ENCODE measurements at regions of chr4 and their contacts with region 1.

Region 1: DNA sequence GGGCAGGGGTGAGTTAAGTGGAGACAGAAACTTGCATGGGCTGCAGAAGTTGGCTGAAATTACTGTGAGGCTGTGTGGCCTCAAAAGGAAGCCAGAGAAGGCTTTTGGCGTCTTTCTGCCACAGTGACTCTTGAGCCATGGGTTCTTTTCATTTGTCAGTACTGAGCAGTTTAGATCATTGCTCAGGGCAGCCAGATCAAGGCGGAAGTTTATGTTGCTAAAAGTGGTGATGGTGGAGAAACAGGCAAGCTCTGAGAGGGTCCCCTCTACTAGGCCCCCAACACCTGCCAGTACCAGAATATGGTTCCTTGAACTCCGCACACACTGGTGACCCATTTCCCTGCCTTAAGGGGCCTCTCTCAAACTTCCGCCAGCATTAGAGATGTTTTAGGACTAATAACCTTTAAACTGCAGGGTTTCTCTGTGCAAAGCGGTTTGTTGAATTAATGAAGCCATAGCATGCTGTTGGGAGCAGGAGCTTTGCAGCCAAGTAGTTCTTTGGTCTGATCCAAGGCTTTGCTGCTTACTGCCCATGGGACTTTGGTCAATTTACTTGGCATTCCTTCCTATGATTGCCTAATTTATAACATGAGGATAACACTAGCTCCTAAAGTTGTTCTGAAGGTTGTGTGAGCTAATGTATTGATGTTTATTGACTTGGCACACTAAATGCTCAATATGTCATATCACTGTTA is 34.5 kb downstream of the RNF175 start:
- DNase-seq: peak; percentile 26
- H3K4me3 ChIP-seq: no peak overlapping the region
- H3K27ac ChIP-seq: no peak overlapping the region
- H3K4me1 ChIP-seq: peaks cover 42% of the 10 kb centered on the region
- CTCF ChIP-seq: no peak

Region 2: DNA sequence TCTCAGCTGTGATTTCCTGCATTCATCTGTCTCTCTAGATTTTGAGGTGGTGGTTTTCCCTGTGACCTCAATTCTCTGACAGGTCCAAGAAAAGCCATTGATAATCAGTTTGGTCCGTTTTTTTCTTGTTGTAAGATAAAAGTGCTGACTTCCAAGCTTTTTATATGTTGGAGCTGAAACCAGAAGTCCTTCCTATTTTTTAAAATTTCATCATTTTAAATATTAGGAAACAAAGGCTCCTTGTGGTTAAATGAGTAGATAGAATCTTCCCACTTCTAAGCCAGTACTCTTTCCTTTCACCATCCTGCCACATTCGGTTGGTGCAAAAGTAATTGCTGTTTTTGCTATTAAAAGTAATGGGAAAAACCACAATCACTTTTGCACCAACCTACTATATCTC is 16.3 kb after region 1 on chr4:
- CTCF ChIA-PET with region 1: interaction called, 5 read pairs
- POLR2A ChIA-PET with region 1: interaction called, 13 read pairs
- intact Hi-C with region 1: no loop called
- DNase-seq: no peak
- H3K4me3 ChIP-seq: no peak overlapping the region
- H3K27ac ChIP-seq: no peak overlapping the region
- H3K4me1 ChIP-seq: no peaks in the 10 kb centered on the region
- CTCF ChIP-seq: no peak

Measured in OCI-LY7 (cell line).